Naive thymus-derived CD4-positive, alpha-beta T cell (primary cell): ENCODE measurements at regions of chr5 and their contacts with region 1.

Region 1: GRCh38 chr5:151447174-151448037 is at the start of gene SLC36A1:
- DNase-seq: peak; percentile 77 to 99 (median 85)
- ATAC-seq: peak; percentile 100
- H3K4me3 ChIP-seq: peak within 1 kb of the TSS; percentile 77
- H3K4me3 Mint-ChIP-seq: peak within 1 kb of the TSS; percentile 82 to 98 (median 94)
- H3K27ac ChIP-seq: peak within 1 kb of the TSS; percentile 70
- H3K27ac Mint-ChIP-seq: peak within 1 kb of the TSS; percentile 43 to 95 (median 90)
- H3K4me1 ChIP-seq: peaks cover 6 to 15% of the 10 kb centered on the region in 2 donors
- H3K4me1 Mint-ChIP-seq: peaks cover 18 to 22% (median 19%) of the 10 kb centered on the region in 7 donors
- H3K27me3 ChIP-seq: peaks cover 0 to 3% of the 10 kb centered on the region in 2 donors
- H3K27me3 Mint-ChIP-seq: peaks cover 7 to 45% (median 14%) of the 10 kb centered on the region in 5 donors
- total RNA-seq, gene SLC36A1: 4.6 to 16.6 (median 7.1) TPM

Region 2: DNA sequence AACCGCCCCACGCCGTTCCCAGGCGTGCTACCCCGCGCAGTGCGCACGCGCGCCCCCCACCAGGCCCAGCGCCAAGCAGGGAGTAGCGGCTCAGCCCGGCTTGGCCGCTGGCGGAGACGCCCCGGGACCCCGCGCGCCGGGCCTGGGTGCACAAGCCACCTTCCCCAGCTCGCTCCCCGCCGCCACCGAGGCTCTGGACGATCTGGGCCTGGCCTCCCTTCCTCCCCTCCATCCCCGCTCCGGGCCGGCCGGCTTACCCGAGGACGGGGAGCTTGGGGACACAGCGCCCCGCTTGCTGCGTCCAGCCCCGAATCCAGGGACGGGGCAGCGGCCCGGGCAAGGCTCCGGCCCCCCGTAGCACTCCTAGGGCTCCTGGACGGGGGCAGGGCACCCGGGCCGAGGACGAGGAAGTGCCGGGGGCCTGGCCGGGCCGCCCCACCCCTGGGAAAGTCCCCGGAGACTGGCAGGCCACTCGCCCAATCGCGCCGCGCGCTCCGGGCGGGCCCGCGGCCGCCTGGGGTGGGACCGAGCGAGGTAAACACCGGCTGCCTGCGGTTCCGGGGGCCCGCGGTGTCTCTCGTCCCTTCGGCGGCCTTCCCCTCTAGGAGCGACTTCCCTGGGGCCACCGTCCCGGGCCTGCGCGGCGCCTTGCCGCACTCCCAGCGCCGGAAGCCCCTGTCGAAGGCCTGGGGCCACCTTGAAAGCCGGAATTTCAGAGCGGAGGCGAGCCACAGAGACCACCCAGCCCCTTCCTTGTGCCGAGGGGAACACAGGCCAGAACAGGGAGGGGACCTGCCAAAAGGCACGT is 366.6 kb before region 1 on chr5 and contains the start of gene TNIP1:
- CTCF ChIA-PET with region 1: no interaction called
- POLR2A ChIA-PET with region 1: no interaction called
- intact Hi-C with region 1: loop called in 1 of 2 experiments (anchors 5 kb)
- DNase-seq: peak; percentile 86 to 99 (median 90)
- ATAC-seq: peak; percentile 94
- H3K4me3 ChIP-seq: peak within 1 kb of the TSS; percentile 86
- H3K4me3 Mint-ChIP-seq: peak within 1 kb of the TSS; percentile 85 to 95 (median 90)
- H3K27ac ChIP-seq: peak within 1 kb of the TSS; percentile 96
- H3K27ac Mint-ChIP-seq: peak within 1 kb of the TSS; percentile 86 to 95 (median 91)
- H3K4me1 ChIP-seq: peaks cover 37 to 69% of the 10 kb centered on the region in 2 donors
- H3K4me1 Mint-ChIP-seq: peaks cover 53 to 84% (median 73%) of the 10 kb centered on the region in 7 donors
- H3K27me3 ChIP-seq: no peaks in the 10 kb centered on the region
- H3K27me3 Mint-ChIP-seq: no peaks in the 10 kb centered on the region
- total RNA-seq, gene TNIP1: 124 to 234 (median 131) TPM

Region 3: GRCh38 chr5:151213800-151214613 is 233.4 kb before region 1 on chr5:
- CTCF ChIA-PET with region 1: no interaction called
- POLR2A ChIA-PET with region 1: no interaction called
- intact Hi-C with region 1: loop called in 1 of 2 experiments (anchors 2 kb)
- DNase-seq: peak; percentile 53 to 85 (median 79)
- ATAC-seq: peak; percentile 90
- H3K4me3 ChIP-seq: peak overlapping the region; percentile 74
- H3K4me3 Mint-ChIP-seq: peak overlapping the region; percentile 80 to 93 (median 89)
- H3K27ac ChIP-seq: peak overlapping the region; percentile 93
- H3K27ac Mint-ChIP-seq: peak overlapping the region; percentile 90 to 98 (median 97)
- H3K4me1 ChIP-seq: peaks cover 80 to 82% of the 10 kb centered on the region in 2 donors
- H3K4me1 Mint-ChIP-seq: peaks cover 56 to 95% (median 84%) of the 10 kb centered on the region in 7 donors
- H3K27me3 ChIP-seq: no peaks in the 10 kb centered on the region
- H3K27me3 Mint-ChIP-seq: no peaks in the 10 kb centered on the region

Region 4: GRCh38 chr5:151499501-151500035 is 52.2 kb after region 1 on chr5:
- CTCF ChIA-PET with region 1: interaction called, 10 read pairs
- POLR2A ChIA-PET with region 1: interaction called, 3 read pairs
- intact Hi-C with region 1: loop called (anchors 1 kb)
- DNase-seq: no peak
- ATAC-seq: no peak
- H3K4me3 ChIP-seq: no peak overlapping the region
- H3K4me3 Mint-ChIP-seq: no peak overlapping the region
- H3K27ac ChIP-seq: no peak overlapping the region
- H3K27ac Mint-ChIP-seq: peak overlapping the region in 2 of 9 donors; percentile 17 to 31
- H3K4me1 ChIP-seq: no peaks in the 10 kb centered on the region
- H3K4me1 Mint-ChIP-seq: peaks cover 5 to 6% (median 6%) of the 10 kb centered on the region in 7 donors
- H3K27me3 ChIP-seq: no peaks in the 10 kb centered on the region
- H3K27me3 Mint-ChIP-seq: no peaks in the 10 kb centered on the region

Region 5: DNA sequence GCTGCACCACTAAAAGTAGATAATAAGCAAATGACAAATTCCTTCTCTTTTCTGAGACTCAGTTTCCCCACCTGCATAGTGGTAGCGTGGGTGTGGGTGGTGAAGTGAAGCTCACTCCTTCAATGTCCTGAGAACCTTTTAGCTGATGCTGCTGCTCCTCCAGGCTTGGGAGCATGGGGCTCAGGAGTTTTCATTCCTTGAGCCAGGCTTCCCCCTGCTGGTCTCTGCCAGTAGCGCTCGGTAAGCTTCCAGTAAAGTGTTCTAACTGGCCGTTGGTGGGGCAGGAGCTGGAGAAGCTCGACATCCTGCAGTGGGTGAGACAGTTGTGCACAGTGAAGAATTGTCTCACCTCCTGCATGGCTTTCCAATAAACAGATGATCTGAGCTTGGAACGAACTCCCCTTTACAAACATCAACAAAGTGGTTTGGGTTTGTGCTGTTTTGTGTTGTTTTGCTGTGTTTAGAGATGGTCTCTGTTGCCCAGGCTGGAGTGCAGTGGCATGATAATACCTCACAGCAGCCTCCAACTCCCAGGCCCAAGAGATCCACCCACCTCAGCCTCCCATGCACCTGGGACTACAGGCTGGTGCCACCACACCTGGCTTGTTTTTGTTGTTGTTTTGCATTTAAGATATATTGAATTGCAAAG is 204.7 kb after region 1 on chr5:
- CTCF ChIA-PET with region 1: interaction called, 37 read pairs
- POLR2A ChIA-PET with region 1: interaction called, 8 read pairs
- intact Hi-C with region 1: loop called (anchors 1 kb)
- DNase-seq: peak; percentile 10 to 76 (median 60)
- ATAC-seq: peak; percentile 85
- H3K4me3 ChIP-seq: no peak overlapping the region
- H3K4me3 Mint-ChIP-seq: no peak overlapping the region
- H3K27ac ChIP-seq: no peak overlapping the region
- H3K27ac Mint-ChIP-seq: peak overlapping the region in 1 of 9 donors; percentile 3
- H3K4me1 ChIP-seq: no peaks in the 10 kb centered on the region
- H3K4me1 Mint-ChIP-seq: peaks cover 0 to 4% (median 0%) of the 10 kb centered on the region in 7 donors
- H3K27me3 ChIP-seq: no peaks in the 10 kb centered on the region
- H3K27me3 Mint-ChIP-seq: peaks cover 0 to 21% (median 0%) of the 10 kb centered on the region in 5 donors

Region 6: GRCh38 chr5:151675611-151676313 is 228.4 kb after region 1 on chr5:
- CTCF ChIA-PET with region 1: no interaction called
- POLR2A ChIA-PET with region 1: no interaction called
- intact Hi-C with region 1: no loop called
- DNase-seq: no peak
- ATAC-seq: no peak
- H3K4me3 ChIP-seq: no peak overlapping the region
- H3K4me3 Mint-ChIP-seq: no peak overlapping the region
- H3K27ac ChIP-seq: no peak overlapping the region
- H3K27ac Mint-ChIP-seq: no peak overlapping the region
- H3K4me1 ChIP-seq: no peaks in the 10 kb centered on the region
- H3K4me1 Mint-ChIP-seq: peaks cover 0 to 3% (median 0%) of the 10 kb centered on the region in 7 donors
- H3K27me3 ChIP-seq: no peaks in the 10 kb centered on the region
- H3K27me3 Mint-ChIP-seq: peaks cover 0 to 9% (median 0%) of the 10 kb centered on the region in 5 donors

Region 7: DNA sequence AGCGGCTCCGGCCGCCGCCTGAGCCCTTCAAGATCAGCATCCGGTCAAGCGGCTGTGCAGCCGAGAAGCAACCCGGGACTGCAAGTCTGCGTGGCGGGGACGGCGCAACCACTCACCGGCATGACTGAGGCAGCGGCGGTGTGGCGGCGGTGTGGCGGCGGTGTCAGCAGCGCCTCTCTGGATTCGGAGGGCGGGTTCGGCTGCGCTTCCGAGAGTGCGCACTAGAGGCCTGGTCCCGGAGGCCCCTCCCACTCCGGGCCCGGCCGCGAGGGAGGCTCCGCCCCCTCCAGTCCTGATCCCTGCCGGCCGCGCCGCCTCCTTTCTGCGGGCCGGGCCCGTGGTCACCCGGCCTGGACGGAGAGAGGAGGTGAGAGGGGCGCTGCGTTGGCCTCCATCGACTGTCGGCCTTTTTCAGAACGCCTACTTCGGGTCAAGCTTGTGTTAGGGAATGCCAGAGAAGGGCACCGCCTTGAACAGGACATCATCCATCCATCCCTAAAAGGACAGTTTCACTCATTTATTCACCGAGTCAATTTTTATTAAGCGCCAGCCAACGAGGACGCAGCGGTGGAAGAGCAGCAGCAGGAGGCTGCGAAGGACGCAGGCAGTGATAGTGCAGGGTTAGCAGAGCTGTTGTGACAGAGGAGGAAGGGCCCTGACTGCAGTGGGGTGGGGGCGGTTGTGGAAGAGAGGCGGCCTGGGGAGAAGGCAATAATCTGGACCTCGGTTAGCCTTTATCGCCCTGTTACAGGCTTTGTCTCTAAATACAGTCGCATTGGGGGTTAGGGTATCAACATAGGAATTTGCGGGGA is 311.2 kb after region 1 on chr5 and contains the start of gene ATOX1:
- CTCF ChIA-PET with region 1: no interaction called
- POLR2A ChIA-PET with region 1: no interaction called
- intact Hi-C with region 1: loop called in 1 of 2 experiments (anchors 5 kb)
- DNase-seq: peak; percentile 85 to 93 (median 89)
- ATAC-seq: peak; percentile 100
- H3K4me3 ChIP-seq: peak within 1 kb of the TSS; percentile 94
- H3K4me3 Mint-ChIP-seq: peak within 1 kb of the TSS; percentile 88 to 99 (median 94)
- H3K27ac ChIP-seq: peak within 1 kb of the TSS; percentile 94
- H3K27ac Mint-ChIP-seq: peak within 1 kb of the TSS; percentile 88 to 98 (median 94)
- H3K4me1 ChIP-seq: peaks cover 14 to 20% of the 10 kb centered on the region in 2 donors
- H3K4me1 Mint-ChIP-seq: peaks cover 16 to 50% (median 39%) of the 10 kb centered on the region in 7 donors
- H3K27me3 ChIP-seq: no peaks in the 10 kb centered on the region
- H3K27me3 Mint-ChIP-seq: peaks cover 0 to 3% (median 0%) of the 10 kb centered on the region in 5 donors
- total RNA-seq, gene ATOX1: 14.8 to 58.2 (median 29.6) TPM

Region 8: DNA sequence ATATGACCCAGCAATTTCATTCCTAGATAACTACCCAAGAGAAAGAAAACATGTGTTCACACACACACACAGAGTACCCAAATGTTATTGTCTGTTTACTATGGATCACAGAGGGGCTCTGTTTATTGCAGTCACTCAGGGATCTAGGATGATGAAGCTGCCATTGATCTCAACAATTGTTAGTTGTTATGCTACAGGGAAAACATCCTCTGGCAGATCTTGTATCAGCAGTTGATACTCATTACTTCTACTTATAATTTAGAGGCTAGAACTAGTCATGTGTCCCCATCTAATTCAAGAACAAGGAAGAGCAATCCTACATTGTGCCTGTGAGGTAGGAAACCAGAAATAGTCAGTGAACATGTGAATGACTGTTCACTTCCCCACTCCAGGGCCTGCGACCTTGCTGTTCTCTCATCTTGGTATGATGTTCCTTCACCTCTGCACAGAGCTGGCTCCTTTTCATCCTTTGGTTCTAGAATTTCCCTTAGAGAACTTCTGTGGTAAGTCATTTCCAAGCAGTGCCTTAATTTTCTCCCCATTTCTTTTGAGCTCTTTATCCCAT is 927.4 kb after region 1 on chr5:
- CTCF ChIA-PET with region 1: no interaction called
- POLR2A ChIA-PET with region 1: no interaction called
- intact Hi-C with region 1: no loop called
- DNase-seq: no peak
- ATAC-seq: no peak
- H3K4me3 ChIP-seq: no peak overlapping the region
- H3K4me3 Mint-ChIP-seq: no peak overlapping the region
- H3K27ac ChIP-seq: no peak overlapping the region
- H3K27ac Mint-ChIP-seq: no peak overlapping the region
- H3K4me1 ChIP-seq: no peaks in the 10 kb centered on the region
- H3K4me1 Mint-ChIP-seq: no peaks in the 10 kb centered on the region
- H3K27me3 ChIP-seq: no peaks in the 10 kb centered on the region
- H3K27me3 Mint-ChIP-seq: peaks cover 0 to 13% (median 9%) of the 10 kb centered on the region in 5 donors

Region 9: DNA sequence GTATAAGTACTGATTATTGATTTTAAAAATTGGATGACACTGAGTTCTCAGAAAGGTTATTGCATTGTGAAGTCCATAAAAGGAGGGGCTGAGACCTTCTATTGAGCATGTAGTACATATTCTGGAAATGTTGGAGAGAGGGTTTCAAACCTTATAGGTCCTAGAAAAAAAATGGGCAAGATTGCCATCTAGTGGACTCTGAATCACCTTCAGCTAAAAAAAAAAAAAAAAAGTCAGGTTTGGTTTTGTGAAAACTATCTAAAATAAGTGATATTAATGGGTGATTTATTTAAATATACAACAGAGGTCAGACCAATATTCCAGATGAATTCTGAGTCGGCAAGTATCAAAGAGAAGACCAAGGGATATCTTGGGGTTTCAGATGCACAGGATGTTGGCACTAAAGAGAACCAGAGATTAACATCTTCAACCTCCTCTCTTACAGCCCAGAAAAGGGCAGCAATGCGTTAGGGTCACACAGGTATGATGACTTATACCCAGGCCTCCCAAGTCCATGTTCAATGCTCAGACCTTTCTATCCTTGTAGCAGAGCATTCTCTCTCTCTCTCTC is 1067.5 kb after region 1 on chr5:
- CTCF ChIA-PET with region 1: no interaction called
- POLR2A ChIA-PET with region 1: no interaction called
- intact Hi-C with region 1: loop called in 1 of 2 experiments (anchors 2 kb)
- DNase-seq: no peak
- ATAC-seq: no peak
- H3K4me3 ChIP-seq: no peak overlapping the region
- H3K4me3 Mint-ChIP-seq: no peak overlapping the region
- H3K27ac ChIP-seq: no peak overlapping the region
- H3K27ac Mint-ChIP-seq: no peak overlapping the region
- H3K4me1 ChIP-seq: no peaks in the 10 kb centered on the region
- H3K4me1 Mint-ChIP-seq: peaks cover 0 to 2% (median 0%) of the 10 kb centered on the region in 7 donors
- H3K27me3 ChIP-seq: no peaks in the 10 kb centered on the region
- H3K27me3 Mint-ChIP-seq: peaks cover 10 to 27% (median 20%) of the 10 kb centered on the region in 5 donors